ENCODE measurements at regions of chr6 and their contacts with region 1.

Region 1: GRCh38 chr6:42453031-42453653 is 1.4 kb upstream of the TRERF1 start:
- DNase-seq: peak; percentile 53 to 88
- ATAC-seq: peak; percentile 61 to 75 (median 74)
- H3K4me3 ChIP-seq: peak overlapping the region; percentile 65
- H3K4me3 Mint-ChIP-seq: peak overlapping the region; percentile 99
- H3K27ac ChIP-seq: no peak overlapping the region
- H3K27ac Mint-ChIP-seq: peak overlapping the region; percentile 57 to 96
- H3K4me1 ChIP-seq: peaks cover 32% of the 10 kb centered on the region
- H3K4me1 Mint-ChIP-seq: peaks cover 38 to 45% of the 10 kb centered on the region in 2 donors
- H3K27me3 ChIP-seq: no peaks in the 10 kb centered on the region
- H3K27me3 Mint-ChIP-seq: no peaks in the 10 kb centered on the region
- CTCF ChIP-seq: no peak

Region 2: GRCh38 chr6:41901882-41902519 is 551.1 kb before region 1 on chr6:
- intact Hi-C with region 1: no loop called
- DNase-seq: peak; percentile 32 to 82
- ATAC-seq: peak; percentile 54 to 78 (median 69)
- H3K4me3 ChIP-seq: no peak overlapping the region
- H3K4me3 Mint-ChIP-seq: no peak overlapping the region
- H3K27ac ChIP-seq: no peak overlapping the region
- H3K27ac Mint-ChIP-seq: peak overlapping the region; percentile 14 to 52
- H3K4me1 ChIP-seq: peaks cover 4% of the 10 kb centered on the region
- H3K4me1 Mint-ChIP-seq: peaks cover 18 to 20% of the 10 kb centered on the region in 2 donors
- H3K27me3 ChIP-seq: no peaks in the 10 kb centered on the region
- H3K27me3 Mint-ChIP-seq: no peaks in the 10 kb centered on the region
- CTCF ChIP-seq: peak; percentile 49

Region 3: DNA sequence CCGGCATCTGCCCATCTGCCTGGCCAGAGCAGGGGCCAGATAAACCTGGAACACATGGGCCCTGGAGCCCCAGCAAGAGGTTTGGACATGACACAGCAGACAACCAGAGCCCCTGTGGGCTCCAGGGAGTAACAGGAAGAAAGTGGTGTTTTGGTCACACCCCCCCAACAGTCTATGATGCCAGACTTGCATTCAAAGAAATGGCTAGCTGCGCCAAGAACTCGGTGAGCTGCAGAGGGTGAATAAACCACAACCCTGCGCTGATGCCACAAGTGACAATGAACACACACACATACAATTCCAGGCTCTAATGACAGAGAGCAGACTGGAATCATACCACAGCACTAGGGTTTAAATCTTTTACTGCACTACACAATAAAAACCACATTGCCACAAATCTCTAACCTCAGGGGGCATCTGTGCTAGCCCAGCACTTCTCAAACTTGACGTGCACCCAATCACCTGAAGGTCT is 35.5 kb before region 1 on chr6:
- intact Hi-C with region 1: loop called (anchors 2 kb)
- DNase-seq: peak; percentile 52 to 79
- ATAC-seq: peak; percentile 89 to 94 (median 90)
- H3K4me3 ChIP-seq: no peak overlapping the region
- H3K4me3 Mint-ChIP-seq: peak overlapping the region; percentile 68
- H3K27ac ChIP-seq: no peak overlapping the region
- H3K27ac Mint-ChIP-seq: peak overlapping the region; percentile 69 to 80
- H3K4me1 ChIP-seq: peaks cover 20% of the 10 kb centered on the region
- H3K4me1 Mint-ChIP-seq: peaks cover 40 to 58% of the 10 kb centered on the region in 2 donors
- H3K27me3 ChIP-seq: no peaks in the 10 kb centered on the region
- H3K27me3 Mint-ChIP-seq: no peaks in the 10 kb centered on the region
- CTCF ChIP-seq: no peak

Region 4: DNA sequence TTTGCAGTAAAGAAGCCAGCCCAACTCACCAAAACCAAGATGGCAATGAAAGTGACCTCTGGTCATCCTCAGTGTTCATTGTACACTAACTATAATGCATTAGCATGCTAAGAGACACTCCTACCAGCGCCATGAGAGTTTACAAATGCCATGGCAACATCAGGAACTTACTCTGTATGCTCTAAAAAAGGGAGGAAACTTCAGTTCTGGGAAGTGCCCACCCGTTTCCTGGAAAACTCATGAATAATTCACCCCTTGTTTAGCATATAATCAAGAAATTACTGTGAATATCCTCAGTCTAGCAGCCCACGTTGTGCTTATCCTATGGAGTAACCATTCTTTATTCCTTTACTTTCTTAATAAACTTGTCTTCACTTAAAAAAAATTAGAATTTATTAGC is 18.0 kb after region 1 on chr6:
- intact Hi-C with region 1: loop called (anchors 1 kb)
- DNase-seq: no peak
- ATAC-seq: no peak
- H3K4me3 ChIP-seq: no peak overlapping the region
- H3K4me3 Mint-ChIP-seq: no peak overlapping the region
- H3K27ac ChIP-seq: no peak overlapping the region
- H3K27ac Mint-ChIP-seq: no peak overlapping the region
- H3K4me1 ChIP-seq: no peaks in the 10 kb centered on the region
- H3K4me1 Mint-ChIP-seq: no peaks in the 10 kb centered on the region
- H3K27me3 ChIP-seq: no peaks in the 10 kb centered on the region
- H3K27me3 Mint-ChIP-seq: no peaks in the 10 kb centered on the region
- CTCF ChIP-seq: no peak